AG04449 (cell line): ENCODE measurements at regions of chr17 and their contacts with region 1.

Region 1: GRCh38 chr17:30124273-30124796 is 7.7 kb downstream of the NSRP1 start:
- DNase-seq: no peak
- H3K4me3 ChIP-seq: no peak overlapping the region
- CTCF ChIP-seq: no peak

Region 2: GRCh38 chr17:30104575-30105339 is 19.6 kb before region 1 on chr17:
- CTCF ChIA-PET with region 1: interaction called, 59 read pairs
- POLR2A ChIA-PET with region 1: no interaction called
- DNase-seq: no peak
- H3K4me3 ChIP-seq: peak overlapping the region; percentile 60
- CTCF ChIP-seq: peak; percentile 86

Region 3: GRCh38 chr17:30148376-30148775 is 24.0 kb after region 1 on chr17:
- CTCF ChIA-PET with region 1: interaction called, 33 read pairs
- POLR2A ChIA-PET with region 1: no interaction called
- DNase-seq: no peak
- H3K4me3 ChIP-seq: no peak overlapping the region
- CTCF ChIP-seq: no peak

Region 4: DNA sequence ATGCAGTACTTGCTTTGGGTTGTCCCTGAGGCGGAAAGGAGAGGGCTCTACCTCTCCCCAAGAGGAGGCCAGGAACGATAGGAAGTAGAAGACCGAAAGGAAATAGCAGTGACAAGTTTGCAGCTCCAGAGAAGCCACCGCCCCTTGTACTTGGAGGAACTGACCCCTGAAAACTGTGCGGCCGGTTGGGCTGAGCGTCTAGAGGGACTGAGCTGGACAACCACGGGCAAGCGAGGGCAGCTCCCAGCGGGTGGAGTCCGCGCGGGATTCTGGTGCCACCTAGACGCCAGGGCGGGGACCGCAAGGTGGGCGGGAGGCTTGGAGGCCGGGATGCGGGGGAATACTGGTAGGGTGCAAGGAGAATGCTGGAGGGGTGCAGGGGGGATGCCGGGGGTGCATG is 112.4 kb after region 1 on chr17:
- CTCF ChIA-PET with region 1: interaction called, 11 read pairs
- POLR2A ChIA-PET with region 1: no interaction called
- DNase-seq: no peak
- H3K4me3 ChIP-seq: no peak overlapping the region
- CTCF ChIP-seq: peak; percentile 40

Region 5: DNA sequence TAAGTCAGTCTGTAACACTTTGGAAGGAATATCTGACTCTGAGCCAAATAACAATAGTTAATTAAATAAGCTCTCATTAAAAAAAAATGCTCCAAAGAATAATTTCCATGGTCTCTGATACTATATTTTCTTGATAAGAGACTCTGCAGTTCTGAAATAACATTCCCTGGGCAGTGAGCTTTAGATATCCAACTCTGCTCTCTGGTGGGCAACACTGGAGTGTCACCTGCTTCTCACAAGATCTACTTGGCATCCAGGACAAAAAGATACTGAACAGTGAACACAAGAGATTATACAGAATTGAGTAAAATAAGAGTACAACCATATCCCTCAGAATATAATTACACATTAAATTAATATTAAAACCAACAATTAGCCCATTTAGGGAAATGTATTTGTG is 153.7 kb after region 1 on chr17:
- CTCF ChIA-PET with region 1: interaction called, 36 read pairs
- POLR2A ChIA-PET with region 1: no interaction called
- DNase-seq: no peak
- H3K4me3 ChIP-seq: no peak overlapping the region
- CTCF ChIP-seq: peak; percentile 41